Heart right ventricle (tissue), 16 donors: ENCODE measurements at regions of chr6 and their contacts with region 1.

Region 1: GRCh38 chr6:63685446-63686379 is 50.1 kb downstream of the PHF3 start:
- DNase-seq: no peak
- ATAC-seq: no peak
- H3K4me3 ChIP-seq: no peak overlapping the region
- H3K27ac ChIP-seq: peak overlapping the region in 1 of 10 donors; percentile 11
- H3K4me1 ChIP-seq: peaks cover 0 to 43% (median 4%) of the 10 kb centered on the region in 9 donors
- H3K27me3 ChIP-seq: no peaks in the 10 kb centered on the region
- CTCF ChIP-seq: no peak

Region 2: DNA sequence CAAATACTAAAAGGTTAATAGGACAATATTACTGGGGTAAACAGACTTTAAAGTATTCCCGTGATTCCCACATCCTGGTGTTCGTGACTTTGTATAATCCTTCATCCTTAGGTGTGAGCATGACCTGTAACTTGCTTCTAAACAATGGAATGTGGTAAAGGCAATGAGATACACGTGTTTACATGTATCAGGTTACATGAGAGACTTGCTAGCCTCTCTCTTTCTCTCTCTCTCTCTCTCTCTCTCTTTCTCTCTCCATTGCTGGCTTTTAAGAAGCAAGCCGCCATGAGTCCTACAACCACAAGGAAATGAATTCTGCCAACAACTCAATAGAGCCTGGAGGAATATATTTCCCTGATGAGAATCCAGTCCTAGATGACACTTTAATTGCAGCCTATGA is 282.0 kb before region 1 on chr6:
- intact Hi-C with region 1: no loop called
- DNase-seq: no peak
- ATAC-seq: no peak
- H3K4me3 ChIP-seq: no peak overlapping the region
- H3K27ac ChIP-seq: no peak overlapping the region
- H3K4me1 ChIP-seq: no peaks in the 10 kb centered on the region
- H3K27me3 ChIP-seq: no peaks in the 10 kb centered on the region
- CTCF ChIP-seq: no peak

Region 3: GRCh38 chr6:63571881-63572732 is 113.6 kb before region 1 on chr6 and contains the starts of genes LOC128125822 and PTP4A1:
- intact Hi-C with region 1: loop called in 1 of 10 experiments (anchors 10 kb)
- DNase-seq: peak; percentile 96 to 98
- ATAC-seq: peak; percentile 97 to 100 (median 98)
- H3K4me3 ChIP-seq: peak within 1 kb of the TSS; percentile 77 to 97 (median 94)
- H3K27ac ChIP-seq: peak within 1 kb of the TSS; percentile 95 to 100 (median 99)
- H3K4me1 ChIP-seq: peaks cover 0 to 39% (median 24%) of the 10 kb centered on the region in 9 donors
- H3K27me3 ChIP-seq: no peaks in the 10 kb centered on the region
- CTCF ChIP-seq: no peak
- total RNA-seq, gene PTP4A1: 30.0 to 69.9 (median 51.3) TPM

Region 4: DNA sequence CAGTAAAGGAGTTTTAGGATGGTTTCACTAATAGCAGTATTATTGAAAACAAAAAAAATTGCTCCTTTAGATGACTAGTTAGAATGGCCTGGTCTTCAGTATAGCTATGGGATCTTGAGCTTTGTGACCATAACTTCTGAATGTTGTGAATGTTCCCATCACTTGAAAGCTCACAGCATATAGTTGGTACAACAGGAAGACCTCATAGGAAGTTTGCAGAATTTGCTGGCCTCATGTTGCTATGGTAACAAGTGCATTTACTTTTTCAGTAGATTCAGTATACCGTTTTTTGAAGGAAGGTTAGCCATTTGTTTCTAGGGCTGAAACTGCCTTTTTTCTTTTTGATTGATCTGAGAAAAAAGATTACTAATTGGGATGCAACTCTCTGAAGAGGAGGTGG is 41.9 kb before region 1 on chr6:
- intact Hi-C with region 1: loop called in 4 of 10 experiments (anchors 10 kb)
- DNase-seq: no peak
- ATAC-seq: no peak
- H3K4me3 ChIP-seq: no peak overlapping the region
- H3K27ac ChIP-seq: no peak overlapping the region
- H3K4me1 ChIP-seq: peaks cover 0 to 86% (median 73%) of the 10 kb centered on the region in 9 donors
- H3K27me3 ChIP-seq: no peaks in the 10 kb centered on the region
- CTCF ChIP-seq: no peak